ENCODE measurements at regions of chr11 and their contacts with region 1.

Region 1: DNA sequence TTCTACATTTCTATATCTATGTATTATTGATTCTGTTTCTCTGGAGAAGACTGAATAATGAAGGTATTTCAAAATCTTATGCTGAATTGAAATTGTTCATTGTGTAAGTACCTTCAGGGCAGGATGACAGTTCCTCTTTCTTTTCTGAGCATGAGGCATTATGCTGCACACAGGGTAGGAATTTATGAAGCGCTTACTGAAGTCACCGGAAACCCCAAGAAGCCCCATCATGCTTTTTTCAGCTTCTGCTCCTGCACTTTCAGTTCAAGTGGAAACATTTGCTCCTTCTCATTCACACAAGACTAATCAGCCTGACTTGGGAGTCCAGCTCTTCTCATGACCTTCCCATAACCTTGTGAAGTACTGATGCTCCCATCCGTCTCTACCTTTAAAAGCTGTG is 314.7 kb upstream of the SORL1-AS1 start:
- DNase-seq: no peak
- ATAC-seq: no peak
- H3K4me3 ChIP-seq: no peak overlapping the region
- H3K27ac ChIP-seq: no peak overlapping the region
- H3K4me1 ChIP-seq: peaks cover 0 to 5% (median 0%) of the 10 kb centered on the region in 12 donors
- H3K27me3 ChIP-seq: no peaks in the 10 kb centered on the region
- CTCF ChIP-seq: no peak
- POLR2A ChIP-seq: no peak

Region 2: GRCh38 chr11:122808478-122808869 is 1041.0 kb after region 1 on chr11:
- intact Hi-C with region 1: loop called in 1 of 10 experiments (anchors 10 kb)
- DNase-seq: peak in 2 of 5 donors; percentile 41 to 55
- ATAC-seq: peak; percentile 51 to 91 (median 77)
- H3K4me3 ChIP-seq: no peak overlapping the region
- H3K27ac ChIP-seq: peak overlapping the region in 10 of 12 donors; percentile 13 to 83 (median 68)
- H3K4me1 ChIP-seq: peaks cover 0 to 24% (median 9%) of the 10 kb centered on the region in 12 donors
- H3K27me3 ChIP-seq: no peaks in the 10 kb centered on the region
- CTCF ChIP-seq: no peak
- POLR2A ChIP-seq: no peak

Measured in heart left ventricle (tissue), 16 donors.